ENCODE measurements at regions of chr6 and their contacts with region 1.

Region 1: GRCh38 chr6:42901536-42901957 is 14.3 kb upstream of the PTCRA start:
- DNase-seq: peak; percentile 58
- CTCF ChIP-seq: peak; percentile 92

Region 2: DNA sequence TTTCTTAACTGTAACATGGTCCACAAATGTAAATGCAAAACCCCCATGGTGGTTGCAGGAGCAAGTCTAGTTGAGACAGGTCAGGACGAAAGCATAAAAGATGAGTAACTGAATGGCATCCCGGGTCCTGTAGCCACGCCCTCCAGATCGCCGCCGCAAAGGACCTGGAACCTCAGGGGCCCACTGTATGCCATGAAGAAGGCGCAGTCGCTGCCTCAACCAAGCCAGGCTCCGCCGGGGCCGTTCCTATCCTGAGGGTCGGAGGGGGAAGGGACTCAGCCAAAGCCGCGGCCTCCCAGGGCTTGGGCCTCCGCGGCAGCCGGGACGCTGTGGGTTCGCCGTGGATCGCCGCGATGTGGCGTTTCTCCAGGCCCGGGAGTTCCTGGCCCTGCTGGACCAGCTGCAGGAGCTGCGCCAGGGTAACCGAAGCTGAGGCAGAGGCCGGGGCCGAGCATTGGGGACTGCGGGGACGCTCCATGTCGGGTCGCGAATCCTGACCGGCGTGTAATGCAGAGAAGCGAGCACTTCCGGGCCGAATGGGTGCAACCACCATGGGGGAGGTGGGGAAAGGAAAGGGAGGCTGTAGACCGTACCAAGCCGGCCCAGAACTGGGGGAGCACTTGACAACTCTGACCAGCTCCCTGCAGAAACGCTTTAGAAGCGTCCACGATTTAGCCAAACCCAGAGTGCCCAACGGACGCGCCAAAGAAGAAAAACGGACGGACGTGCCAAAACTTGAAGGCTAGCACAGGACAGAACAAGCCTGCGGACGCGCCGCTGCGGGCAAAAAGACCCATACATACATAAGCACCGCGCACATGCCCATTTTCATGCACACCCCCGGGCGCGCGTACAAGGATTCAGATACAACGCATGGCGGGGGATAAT is 11.0 kb before region 1 on chr6:
- CTCF ChIA-PET with region 1: interaction called, 14 read pairs
- POLR2A ChIA-PET with region 1: no interaction called
- DNase-seq: peak; percentile 94
- CTCF ChIP-seq: no peak

Region 3: DNA sequence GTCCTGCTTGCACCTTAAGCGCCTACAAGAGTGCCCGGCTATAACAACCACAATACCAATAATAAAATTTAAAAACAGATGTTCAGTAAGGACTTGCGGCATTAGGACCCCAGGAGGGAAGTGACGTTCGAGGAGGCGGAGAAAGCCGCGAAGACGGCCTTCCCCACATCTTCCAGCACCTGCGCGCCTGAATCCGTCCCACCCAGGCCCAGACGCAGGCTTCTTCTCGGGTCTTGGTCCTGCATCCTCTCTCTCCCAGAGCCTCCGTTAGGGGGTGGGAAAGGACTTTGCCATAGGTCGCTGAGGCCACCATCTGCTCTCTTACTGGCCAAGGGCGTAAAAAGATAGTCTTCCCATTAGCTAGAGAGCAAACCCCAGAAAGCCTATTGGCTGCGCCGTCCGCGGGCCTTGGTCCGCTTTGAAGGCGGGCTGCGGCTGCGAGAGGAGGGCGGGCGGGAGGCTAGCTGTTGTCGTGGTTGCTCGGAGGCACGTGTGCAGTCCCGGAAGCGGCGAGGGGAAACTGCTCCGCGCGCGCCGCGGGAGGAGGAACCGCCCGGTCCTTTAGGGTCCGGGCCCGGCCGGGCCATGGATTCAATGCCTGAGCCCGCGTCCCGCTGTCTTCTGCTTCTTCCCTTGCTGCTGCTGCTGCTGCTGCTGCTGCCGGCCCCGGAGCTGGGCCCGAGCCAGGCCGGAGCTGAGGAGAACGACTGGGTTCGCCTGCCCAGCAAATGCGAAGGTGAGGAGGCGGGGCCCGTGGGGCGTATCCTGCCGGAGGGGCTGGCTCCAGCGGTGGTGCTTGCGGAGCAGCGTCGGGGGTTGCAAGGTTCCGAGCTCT is 27.7 kb after region 1 on chr6 and contains the start of gene CNPY3:
- CTCF ChIA-PET with region 1: interaction called, 17 read pairs
- POLR2A ChIA-PET with region 1: no interaction called
- DNase-seq: peak; percentile 90
- CTCF ChIP-seq: no peak

Measured in GM10248 (cell line).